ENCODE measurements at regions of chr6 and their contacts with region 1.

Region 1: DNA sequence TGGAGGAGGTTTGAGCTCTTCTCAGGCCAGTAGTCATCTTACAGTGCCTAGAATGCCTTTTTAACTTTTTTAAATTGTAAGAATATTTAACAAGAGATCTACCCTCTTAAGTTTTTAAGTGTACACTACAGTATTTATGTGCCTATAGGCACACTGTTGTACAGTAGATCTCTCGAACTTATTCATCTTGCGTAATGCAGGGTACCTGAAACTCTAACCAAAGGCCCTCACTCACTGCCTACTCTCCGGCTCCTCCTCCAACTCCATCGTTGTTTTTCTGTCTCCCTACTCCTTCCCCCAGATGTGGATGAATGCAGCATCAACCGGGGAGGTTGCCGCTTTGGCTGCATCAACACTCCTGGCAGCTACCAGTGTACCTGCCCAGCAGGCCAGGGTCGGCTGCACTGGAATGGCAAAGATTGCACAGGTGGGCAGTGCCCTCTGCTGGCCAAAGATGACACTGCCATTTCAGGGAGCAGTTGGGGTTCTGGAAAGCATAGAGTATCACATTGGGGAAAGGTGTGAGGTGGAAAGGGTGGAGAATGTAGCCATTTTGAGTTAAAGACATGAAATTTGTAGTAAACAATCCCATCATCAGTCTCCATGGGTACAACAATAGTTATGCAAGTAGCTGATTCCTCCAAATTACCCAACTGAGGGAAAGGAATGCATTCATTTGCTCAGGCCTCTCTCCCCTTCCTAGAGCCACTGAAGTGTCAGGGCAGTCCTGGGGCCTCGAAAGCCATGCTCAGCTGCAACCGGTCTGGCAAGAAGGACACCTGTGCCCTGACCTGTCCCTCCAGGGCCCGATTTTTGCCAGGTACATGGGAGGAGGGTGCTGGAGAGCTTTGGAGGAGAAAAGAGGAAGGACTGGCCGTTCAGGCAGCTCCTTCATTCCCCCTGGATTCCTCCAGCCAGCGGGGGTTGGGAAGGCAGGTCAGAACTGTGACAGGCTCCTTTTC is 18.4 kb upstream of the ZNF76 start:
- DNase-seq: no peak
- ATAC-seq: peak; percentile 99
- H3K4me3 ChIP-seq: no peak overlapping the region
- H3K27ac ChIP-seq: no peak overlapping the region
- H3K4me1 ChIP-seq: no peaks in the 10 kb centered on the region
- H3K27me3 ChIP-seq: no peaks in the 10 kb centered on the region
- CTCF ChIP-seq: peak; percentile 94 to 99 (median 95)
- EP300 ChIP-seq: no peak
- POLR2A ChIP-seq: no peak
- RAD21 ChIP-seq: peak; percentile 84

Region 2: GRCh38 chr6:35139908-35140655 is 101.0 kb before region 1 on chr6:
- CTCF ChIA-PET with region 1: interaction called, 38 read pairs
- POLR2A ChIA-PET with region 1: no interaction called
- RAD21 ChIA-PET with region 1: interaction called, 8 read pairs
- SMC1A ChIA-PET with region 1: interaction called, 6 read pairs
- in situ Hi-C with region 1: no loop called
- intact Hi-C with region 1: loop called (anchors 2 kb)
- DNase-seq: peak; percentile 32
- ATAC-seq: peak; percentile 74
- H3K4me3 ChIP-seq: no peak overlapping the region
- H3K27ac ChIP-seq: no peak overlapping the region
- H3K4me1 ChIP-seq: peaks cover 3% of the 10 kb centered on the region; the same call in 1 of the 2 replicates
- H3K27me3 ChIP-seq: no peaks in the 10 kb centered on the region
- CTCF ChIP-seq: peak; percentile 68 to 89 (median 77)
- EP300 ChIP-seq: no peak
- POLR2A ChIP-seq: no peak
- RAD21 ChIP-seq: peak; percentile 95

Region 3: GRCh38 chr6:35161776-35162607 is 79.1 kb before region 1 on chr6:
- CTCF ChIA-PET with region 1: interaction called, 12 read pairs
- POLR2A ChIA-PET with region 1: no interaction called
- RAD21 ChIA-PET with region 1: no interaction called
- SMC1A ChIA-PET with region 1: no interaction called
- in situ Hi-C with region 1: no loop called
- intact Hi-C with region 1: no loop called
- DNase-seq: no peak
- ATAC-seq: peak; percentile 38; the same call in 2 of the 3 replicates
- H3K4me3 ChIP-seq: no peak overlapping the region
- H3K27ac ChIP-seq: no peak overlapping the region
- H3K4me1 ChIP-seq: peaks cover 11% of the 10 kb centered on the region; the same call in 1 of the 2 replicates
- H3K27me3 ChIP-seq: no peaks in the 10 kb centered on the region; a peak in 1 of 4 replicates
- CTCF ChIP-seq: no peak
- EP300 ChIP-seq: no peak
- POLR2A ChIP-seq: no peak
- RAD21 ChIP-seq: no peak

Region 4: GRCh38 chr6:35209081-35209480 is 32.0 kb before region 1 on chr6:
- CTCF ChIA-PET with region 1: interaction called, 33 read pairs
- POLR2A ChIA-PET with region 1: no interaction called
- RAD21 ChIA-PET with region 1: interaction called, 13 read pairs
- SMC1A ChIA-PET with region 1: interaction called, 10 read pairs
- in situ Hi-C with region 1: no loop called
- intact Hi-C with region 1: loop called (anchors 5 kb)
- DNase-seq: no peak
- ATAC-seq: no peak
- H3K4me3 ChIP-seq: no peak overlapping the region
- H3K27ac ChIP-seq: no peak overlapping the region
- H3K4me1 ChIP-seq: no peaks in the 10 kb centered on the region
- H3K27me3 ChIP-seq: peaks cover 2 to 9% of the 10 kb centered on the region in 2 experiments
- CTCF ChIP-seq: no peak
- EP300 ChIP-seq: no peak
- POLR2A ChIP-seq: no peak
- RAD21 ChIP-seq: no peak

Region 5: GRCh38 chr6:35259194-35259947 is 18.2 kb after region 1 on chr6 and contains the start of gene ZNF76:
- CTCF ChIA-PET with region 1: interaction called, 52 read pairs
- POLR2A ChIA-PET with region 1: interaction called, 9 read pairs
- RAD21 ChIA-PET with region 1: no interaction called
- SMC1A ChIA-PET with region 1: interaction called, 3 read pairs
- in situ Hi-C with region 1: no loop called
- intact Hi-C with region 1: no loop called
- DNase-seq: peak; percentile 63
- ATAC-seq: peak; percentile 90
- H3K4me3 ChIP-seq: peak within 1 kb of the TSS; percentile 70
- H3K27ac ChIP-seq: peak within 1 kb of the TSS; percentile 85
- H3K4me1 ChIP-seq: no peaks in the 10 kb centered on the region; the same call in 1 of the 2 replicates
- H3K27me3 ChIP-seq: no peaks in the 10 kb centered on the region
- CTCF ChIP-seq: no peak
- EP300 ChIP-seq: peak in 1 of 2 experiments; percentile 50; a peak in 2 of 4 replicates
- POLR2A ChIP-seq: peak; percentile 89
- RAD21 ChIP-seq: no peak
- polyA plus RNA-seq, gene ZNF76: 2.8 to 3.1 TPM

Region 6: DNA sequence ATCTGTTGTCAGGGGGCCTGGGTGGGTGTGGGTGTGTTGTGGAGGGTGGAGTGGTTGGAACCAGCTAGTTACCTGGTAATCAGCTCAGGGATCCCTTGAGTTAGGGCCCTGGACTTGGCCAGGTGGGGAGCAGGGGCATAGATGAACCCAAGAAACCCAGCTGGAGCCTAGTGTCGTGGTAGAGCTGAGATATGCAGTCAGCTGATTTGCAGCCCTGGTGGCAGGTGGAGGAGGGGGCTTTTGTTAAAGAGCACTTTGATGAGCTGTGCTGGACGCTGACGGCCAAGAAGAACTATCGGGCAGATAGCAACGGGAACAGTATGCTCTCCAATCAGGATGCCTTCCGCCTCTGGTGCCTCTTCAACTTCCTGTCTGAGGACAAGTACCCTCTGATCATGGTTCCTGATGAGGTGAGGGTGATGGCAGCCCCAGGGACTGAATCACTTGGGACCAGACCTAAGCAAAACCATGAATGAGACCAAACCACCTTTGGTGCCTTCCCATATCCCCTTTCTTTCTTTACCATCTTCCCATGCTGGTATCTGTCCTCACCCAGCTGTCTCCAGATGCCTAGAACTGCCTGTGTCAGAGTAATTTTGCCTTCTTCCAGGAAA is 69.2 kb after region 1 on chr6:
- CTCF ChIA-PET with region 1: no interaction called
- POLR2A ChIA-PET with region 1: no interaction called
- RAD21 ChIA-PET with region 1: no interaction called
- SMC1A ChIA-PET with region 1: no interaction called
- in situ Hi-C with region 1: no loop called
- intact Hi-C with region 1: no loop called
- DNase-seq: no peak
- ATAC-seq: no peak; the same call in 2 of the 3 replicates
- H3K4me3 ChIP-seq: no peak overlapping the region
- H3K27ac ChIP-seq: peak overlapping the region; percentile 23; the same call in 1 of the 2 replicates
- H3K4me1 ChIP-seq: peaks cover 19% of the 10 kb centered on the region
- H3K27me3 ChIP-seq: no peaks in the 10 kb centered on the region
- CTCF ChIP-seq: no peak
- EP300 ChIP-seq: no peak
- POLR2A ChIP-seq: no peak; the same call in 1 of the 2 replicates
- RAD21 ChIP-seq: no peak

Region 7: DNA sequence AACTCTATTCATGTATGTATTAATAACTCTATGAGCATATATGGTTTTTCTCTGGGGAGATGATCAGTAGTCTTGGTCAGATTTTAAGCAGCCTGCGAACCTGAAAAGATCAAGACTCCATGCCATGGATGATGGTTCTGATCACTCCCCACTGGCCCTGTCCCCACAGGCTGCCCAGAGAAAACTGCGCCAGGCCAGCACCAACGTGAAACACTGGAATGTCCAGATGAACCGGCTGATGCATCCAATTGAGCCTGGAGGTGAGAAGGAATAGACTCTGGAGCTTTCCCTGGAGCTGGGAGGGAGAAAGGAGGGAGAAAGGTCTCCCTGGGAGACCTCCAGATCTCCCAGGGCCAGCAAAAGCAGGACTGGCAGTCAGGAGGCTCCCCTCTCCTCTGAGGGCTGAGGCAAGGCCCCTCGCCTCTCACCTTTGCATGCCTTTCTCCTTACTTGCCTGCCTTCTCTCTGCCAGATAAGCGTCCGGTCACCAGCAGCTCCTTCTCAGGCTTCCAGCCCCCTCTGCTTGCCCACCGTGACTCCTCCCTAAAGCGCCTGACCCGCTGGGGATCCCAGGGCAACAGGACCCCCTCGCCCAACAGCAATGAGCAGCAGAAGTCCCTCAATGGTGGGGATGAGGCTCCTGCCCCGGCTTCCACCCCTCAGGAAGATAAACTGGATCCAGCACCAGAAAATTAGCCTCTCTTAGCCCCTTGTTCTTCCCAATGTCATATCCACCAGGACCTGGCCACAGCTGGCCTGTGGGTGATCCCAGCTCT is 79.8 kb after region 1 on chr6:
- CTCF ChIA-PET with region 1: no interaction called
- POLR2A ChIA-PET with region 1: no interaction called
- RAD21 ChIA-PET with region 1: no interaction called
- SMC1A ChIA-PET with region 1: no interaction called
- in situ Hi-C with region 1: no loop called
- intact Hi-C with region 1: no loop called
- DNase-seq: no peak
- ATAC-seq: no peak
- H3K4me3 ChIP-seq: no peak overlapping the region
- H3K27ac ChIP-seq: no peak overlapping the region
- H3K4me1 ChIP-seq: no peaks in the 10 kb centered on the region
- H3K27me3 ChIP-seq: no peaks in the 10 kb centered on the region
- CTCF ChIP-seq: no peak
- EP300 ChIP-seq: no peak
- POLR2A ChIP-seq: no peak
- RAD21 ChIP-seq: no peak

Region 8: GRCh38 chr6:35411066-35411465 is 169.9 kb after region 1 on chr6:
- CTCF ChIA-PET with region 1: no interaction called
- POLR2A ChIA-PET with region 1: no interaction called
- RAD21 ChIA-PET with region 1: no interaction called
- SMC1A ChIA-PET with region 1: no interaction called
- in situ Hi-C with region 1: no loop called
- intact Hi-C with region 1: no loop called
- DNase-seq: no peak
- ATAC-seq: no peak
- H3K4me3 ChIP-seq: no peak overlapping the region
- H3K27ac ChIP-seq: no peak overlapping the region
- H3K4me1 ChIP-seq: peaks cover 5% of the 10 kb centered on the region
- H3K27me3 ChIP-seq: no peaks in the 10 kb centered on the region
- CTCF ChIP-seq: no peak
- EP300 ChIP-seq: no peak
- POLR2A ChIP-seq: no peak
- RAD21 ChIP-seq: no peak